ENCODE measurements at regions of chr3 and their contacts with region 1.

Region 1: GRCh38 chr3:46078712-46079400 is 51.6 kb upstream of the XCR1 start:
- DNase-seq: peak; percentile 48
- ATAC-seq: peak; percentile 99
- H3K4me3 Mint-ChIP-seq: peak overlapping the region; percentile 3
- H3K27ac Mint-ChIP-seq: no peak overlapping the region
- H3K4me1 Mint-ChIP-seq: peaks cover 3% of the 10 kb centered on the region
- H3K27me3 Mint-ChIP-seq: no peaks in the 10 kb centered on the region
- CTCF ChIP-seq: peak; percentile 77

Region 2: GRCh38 chr3:45507820-45508317 is 571.0 kb before region 1 on chr3:
- CTCF ChIA-PET with region 1: interaction called, 4 read pairs
- POLR2A ChIA-PET with region 1: no interaction called
- intact Hi-C with region 1: loop called (anchors 5 kb)
- DNase-seq: no peak
- ATAC-seq: no peak
- H3K4me3 Mint-ChIP-seq: no peak overlapping the region
- H3K27ac Mint-ChIP-seq: no peak overlapping the region
- H3K4me1 Mint-ChIP-seq: no peaks in the 10 kb centered on the region
- H3K27me3 Mint-ChIP-seq: no peaks in the 10 kb centered on the region
- CTCF ChIP-seq: no peak

Region 3: GRCh38 chr3:45938864-45939263 is 140.0 kb before region 1 on chr3:
- CTCF ChIA-PET with region 1: interaction called, 172 read pairs
- POLR2A ChIA-PET with region 1: interaction called, 5 read pairs
- intact Hi-C with region 1: loop called (anchors 1 kb)
- DNase-seq: peak; percentile 55
- ATAC-seq: peak; percentile 86
- H3K4me3 Mint-ChIP-seq: no peak overlapping the region
- H3K27ac Mint-ChIP-seq: no peak overlapping the region
- H3K4me1 Mint-ChIP-seq: peaks cover 5% of the 10 kb centered on the region
- H3K27me3 Mint-ChIP-seq: no peaks in the 10 kb centered on the region
- CTCF ChIP-seq: peak; percentile 68

Region 4: DNA sequence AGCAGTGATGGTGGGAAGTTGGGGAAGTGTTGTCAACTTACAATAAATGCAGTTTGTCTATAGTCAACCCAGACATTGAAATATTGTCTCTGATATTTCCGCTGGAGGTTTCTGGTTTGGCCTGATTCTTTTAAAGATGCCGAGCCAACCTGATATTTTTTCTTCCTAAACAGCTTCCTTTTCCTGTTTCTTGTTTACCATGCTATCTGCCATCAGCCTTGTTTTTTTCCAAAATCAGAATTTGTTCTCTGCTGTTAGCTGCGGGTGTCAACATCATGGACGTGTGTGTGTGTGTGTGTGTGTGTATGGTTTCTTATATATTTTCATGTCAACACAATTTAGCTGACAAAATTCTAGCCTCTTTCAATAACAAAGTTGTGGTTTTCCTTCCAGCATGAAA is 10.4 kb before region 1 on chr3:
- CTCF ChIA-PET with region 1: interaction called, 11 read pairs
- POLR2A ChIA-PET with region 1: no interaction called
- intact Hi-C with region 1: no loop called
- DNase-seq: no peak
- ATAC-seq: no peak
- H3K4me3 Mint-ChIP-seq: no peak overlapping the region
- H3K27ac Mint-ChIP-seq: no peak overlapping the region
- H3K4me1 Mint-ChIP-seq: peaks cover 2% of the 10 kb centered on the region
- H3K27me3 Mint-ChIP-seq: no peaks in the 10 kb centered on the region
- CTCF ChIP-seq: no peak

Region 5: DNA sequence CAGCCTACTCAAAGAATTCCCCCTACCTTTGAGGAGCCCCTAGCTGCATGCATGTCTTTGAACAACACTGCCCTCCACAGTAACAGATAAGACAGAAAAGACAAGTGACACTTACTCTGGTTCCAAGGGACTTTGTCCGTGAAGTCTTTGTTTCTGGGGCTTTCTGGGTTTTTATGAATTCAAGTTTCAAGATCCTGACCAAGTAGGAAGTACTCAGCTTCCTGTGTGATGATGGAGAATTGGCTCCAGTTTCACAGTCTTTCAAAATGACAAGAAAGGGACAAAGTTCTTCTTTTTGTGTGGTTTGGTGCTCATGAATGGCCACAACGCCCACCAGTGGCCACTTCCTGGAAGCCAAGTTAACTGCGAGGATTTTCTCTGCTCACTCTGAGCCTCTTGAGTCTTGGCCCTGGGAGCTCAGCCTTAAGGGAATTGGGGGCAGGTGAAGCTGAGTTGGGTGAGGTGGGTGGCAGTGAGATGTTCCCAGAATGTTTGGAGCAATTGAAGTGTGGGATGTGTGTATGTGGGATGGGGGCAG is 129.4 kb after region 1 on chr3 and contains the start of gene CCR1:
- CTCF ChIA-PET with region 1: interaction called, 22 read pairs
- POLR2A ChIA-PET with region 1: no interaction called
- intact Hi-C with region 1: no loop called
- DNase-seq: no peak
- ATAC-seq: peak; percentile 80
- H3K4me3 Mint-ChIP-seq: peak within 1 kb of the TSS; percentile 73
- H3K27ac Mint-ChIP-seq: peak within 1 kb of the TSS; percentile 72
- H3K4me1 Mint-ChIP-seq: peaks cover 52% of the 10 kb centered on the region
- H3K27me3 Mint-ChIP-seq: no peaks in the 10 kb centered on the region
- CTCF ChIP-seq: no peak
- total RNA-seq, gene CCR1: 0.73 and 0.82 TPM in 2 replicates

Region 6: DNA sequence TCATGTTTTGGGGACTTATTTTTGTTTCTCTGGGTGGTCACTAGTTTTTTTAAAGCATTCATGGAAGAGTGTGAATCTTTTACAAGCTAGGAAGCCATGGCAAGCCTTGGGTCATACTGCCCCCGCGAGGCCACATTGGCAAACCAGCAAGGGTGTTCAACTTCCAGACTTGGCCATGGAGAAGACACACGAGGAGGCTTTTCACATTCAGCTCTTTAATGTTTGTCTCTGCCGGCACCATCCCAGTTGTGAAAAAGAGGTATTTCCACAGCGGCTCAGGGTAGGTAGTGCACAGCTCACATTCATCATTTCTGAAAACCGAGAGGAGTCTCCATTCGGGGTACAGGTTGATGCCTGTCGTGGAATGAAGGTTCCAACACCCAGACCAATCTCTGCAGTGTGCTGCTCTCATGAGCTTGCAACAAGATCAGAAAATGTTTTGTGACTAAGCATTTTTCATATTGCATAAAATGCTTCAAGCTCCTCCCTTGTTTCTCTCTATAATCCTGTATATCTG is 299.6 kb after region 1 on chr3:
- CTCF ChIA-PET with region 1: interaction called, 14 read pairs
- POLR2A ChIA-PET with region 1: no interaction called
- intact Hi-C with region 1: no loop called
- DNase-seq: peak; percentile 42
- ATAC-seq: peak; percentile 40
- H3K4me3 Mint-ChIP-seq: no peak overlapping the region
- H3K27ac Mint-ChIP-seq: no peak overlapping the region
- H3K4me1 Mint-ChIP-seq: peaks cover 43% of the 10 kb centered on the region
- H3K27me3 Mint-ChIP-seq: no peaks in the 10 kb centered on the region
- CTCF ChIP-seq: no peak

Region 7: DNA sequence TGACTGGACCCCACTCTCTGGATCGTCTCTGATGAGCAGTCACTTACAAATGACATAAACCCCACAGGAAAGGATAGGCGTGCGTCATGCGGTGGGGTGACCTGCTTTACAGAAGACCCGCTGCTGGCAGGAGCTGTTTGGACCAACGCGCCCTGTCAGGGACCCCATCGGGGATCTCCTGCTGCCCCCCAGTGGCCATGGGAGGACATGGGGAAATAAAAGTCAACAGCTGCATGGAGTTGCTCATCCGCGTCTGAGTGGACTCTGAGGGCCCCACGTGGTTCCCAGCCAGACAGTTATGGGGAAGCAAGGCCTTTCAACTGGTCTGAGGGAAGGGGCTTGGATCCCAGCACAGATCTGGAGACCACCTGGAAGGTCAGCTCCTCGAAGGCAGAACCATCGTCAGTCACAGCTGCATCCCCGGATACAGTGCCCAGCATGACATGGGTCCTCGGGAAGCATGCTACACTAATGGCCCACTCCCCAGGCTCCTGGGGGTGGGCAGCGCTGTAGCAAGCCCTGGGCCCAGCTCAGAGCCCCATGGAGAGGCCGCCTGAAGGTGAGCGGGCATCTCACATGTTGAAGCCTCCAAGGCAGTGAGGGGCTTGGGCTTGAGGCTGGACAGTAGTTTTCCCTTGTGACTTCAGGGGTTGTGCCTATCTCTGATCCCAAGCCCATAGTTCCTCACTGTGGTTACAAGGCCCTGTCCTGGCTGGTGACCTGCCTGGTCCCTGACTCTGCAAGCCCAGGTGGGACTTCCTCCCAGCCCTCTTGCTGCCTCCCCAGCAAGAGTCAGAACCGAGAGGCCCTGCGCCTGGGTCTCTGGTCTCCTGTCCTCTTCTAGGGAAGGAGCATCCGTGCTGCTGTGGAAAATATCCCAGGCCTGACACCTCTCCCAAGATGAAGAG is 830.9 kb after region 1 on chr3:
- CTCF ChIA-PET with region 1: no interaction called
- POLR2A ChIA-PET with region 1: no interaction called
- intact Hi-C with region 1: no loop called
- DNase-seq: peak; percentile 68
- ATAC-seq: peak; percentile 91
- H3K4me3 Mint-ChIP-seq: no peak overlapping the region
- H3K27ac Mint-ChIP-seq: no peak overlapping the region
- H3K4me1 Mint-ChIP-seq: peaks cover 7% of the 10 kb centered on the region
- H3K27me3 Mint-ChIP-seq: no peaks in the 10 kb centered on the region
- CTCF ChIP-seq: peak; percentile 44

Measured in activated B cell treated with CpG ODN at 0.5 μM for 24 hours (primary cell).